ENCODE measurements at regions of chr3 and their contacts with region 1.

Region 1: DNA sequence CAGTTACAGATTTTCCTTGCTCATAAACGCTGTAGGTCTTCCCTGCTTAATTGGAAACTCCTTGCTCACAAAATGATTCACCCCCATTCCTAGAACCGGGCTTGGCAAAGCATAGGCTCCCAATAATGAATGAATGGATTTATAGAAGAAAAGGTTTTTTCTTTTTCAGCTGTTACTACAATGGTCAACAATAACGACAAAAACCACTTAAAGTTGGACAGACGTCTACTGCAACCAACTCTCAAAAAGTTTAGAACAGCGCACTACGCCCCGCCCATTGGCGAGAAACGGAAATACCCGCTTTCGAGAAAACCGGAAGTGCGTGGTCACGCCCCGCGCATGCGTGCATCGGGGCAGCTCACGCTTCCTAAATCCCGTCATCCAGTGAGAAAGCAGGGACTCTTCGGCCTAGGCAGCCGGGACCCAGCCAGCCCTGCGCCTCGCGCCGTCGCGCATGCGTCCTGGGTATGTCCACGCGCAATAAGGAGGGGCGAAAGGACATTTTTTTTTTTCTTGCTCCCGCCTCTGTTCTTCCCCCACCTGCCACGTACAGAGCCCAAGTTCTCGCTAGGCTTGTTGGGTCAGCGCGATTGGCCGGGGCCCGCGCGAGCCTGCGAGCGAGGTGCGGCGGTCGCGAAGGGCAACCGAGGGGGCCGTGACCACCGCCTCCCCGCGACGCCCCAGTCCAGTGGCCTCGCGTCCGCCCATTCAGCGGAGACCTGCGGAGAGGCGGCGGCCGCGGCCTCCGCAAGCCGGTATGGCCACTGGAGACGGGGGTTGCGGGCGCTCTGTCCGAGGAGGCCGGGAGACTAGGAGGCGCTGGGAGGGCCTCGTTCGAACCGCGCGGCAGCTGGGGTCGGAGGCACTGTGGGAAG is at the start of gene TFG:
- DNase-seq: peak; percentile 97
- ATAC-seq: peak; percentile 90
- H3K4me3 Mint-ChIP-seq: peak within 1 kb of the TSS; percentile 88
- H3K27ac Mint-ChIP-seq: peak within 1 kb of the TSS; percentile 92
- H3K4me1 Mint-ChIP-seq: peaks cover 40% of the 10 kb centered on the region
- H3K27me3 Mint-ChIP-seq: peaks cover 17% of the 10 kb centered on the region
- CTCF ChIP-seq: no peak
- total RNA-seq, gene TFG: 42.5 and 44.5 TPM in 2 replicates

Region 2: DNA sequence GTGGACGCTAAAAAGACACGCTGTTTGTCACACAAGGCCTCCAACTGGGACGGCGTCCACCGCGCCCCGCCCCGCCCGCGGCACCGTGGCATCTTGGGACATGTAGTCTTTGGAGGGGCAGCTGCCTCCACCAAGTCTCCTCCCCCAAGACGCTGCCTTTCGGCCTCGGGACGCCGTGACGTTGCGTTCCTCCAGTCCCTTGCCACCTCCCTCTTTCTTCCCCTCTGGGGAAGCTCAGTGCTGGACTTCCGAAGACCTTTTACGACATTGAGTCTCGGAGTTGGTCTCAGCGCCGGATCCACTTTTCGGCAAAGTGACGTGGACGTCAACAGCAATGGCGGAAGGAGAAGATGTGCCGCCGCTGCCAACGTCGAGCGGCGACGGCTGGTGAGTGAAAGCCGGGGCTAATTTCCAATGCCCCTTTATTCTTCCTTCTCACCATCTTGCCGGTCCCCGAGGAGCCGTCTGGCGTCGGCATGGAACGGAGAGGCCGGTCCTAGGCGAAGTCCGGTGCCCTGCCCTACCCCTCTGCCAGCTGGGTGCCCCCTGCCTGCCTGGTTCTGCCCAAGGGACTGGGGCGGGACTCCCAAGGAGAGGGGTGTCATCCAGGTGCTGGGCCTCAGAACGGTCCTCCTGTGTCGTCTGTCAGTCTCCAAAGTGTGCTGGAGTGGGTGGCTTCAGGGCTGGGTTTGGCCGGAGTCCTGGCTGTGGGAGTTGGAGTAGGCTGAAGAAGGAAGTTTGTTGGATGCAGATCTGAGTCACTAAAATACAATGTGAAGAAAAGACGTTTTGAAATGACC is 448.3 kb before region 1 on chr3 and contains the start of gene TBC1D23:
- CTCF ChIA-PET with region 1: no interaction called
- POLR2A ChIA-PET with region 1: interaction called, 9 read pairs
- intact Hi-C with region 1: loop called (anchors 1 kb)
- DNase-seq: peak; percentile 93
- ATAC-seq: peak; percentile 100
- H3K4me3 Mint-ChIP-seq: peak within 1 kb of the TSS; percentile 93
- H3K27ac Mint-ChIP-seq: peak within 1 kb of the TSS; percentile 96
- H3K4me1 Mint-ChIP-seq: peaks cover 43% of the 10 kb centered on the region
- H3K27me3 Mint-ChIP-seq: no peaks in the 10 kb centered on the region
- CTCF ChIP-seq: no peak
- total RNA-seq, gene TBC1D23: 27.2 and 27.7 TPM in 2 replicates

Region 3: DNA sequence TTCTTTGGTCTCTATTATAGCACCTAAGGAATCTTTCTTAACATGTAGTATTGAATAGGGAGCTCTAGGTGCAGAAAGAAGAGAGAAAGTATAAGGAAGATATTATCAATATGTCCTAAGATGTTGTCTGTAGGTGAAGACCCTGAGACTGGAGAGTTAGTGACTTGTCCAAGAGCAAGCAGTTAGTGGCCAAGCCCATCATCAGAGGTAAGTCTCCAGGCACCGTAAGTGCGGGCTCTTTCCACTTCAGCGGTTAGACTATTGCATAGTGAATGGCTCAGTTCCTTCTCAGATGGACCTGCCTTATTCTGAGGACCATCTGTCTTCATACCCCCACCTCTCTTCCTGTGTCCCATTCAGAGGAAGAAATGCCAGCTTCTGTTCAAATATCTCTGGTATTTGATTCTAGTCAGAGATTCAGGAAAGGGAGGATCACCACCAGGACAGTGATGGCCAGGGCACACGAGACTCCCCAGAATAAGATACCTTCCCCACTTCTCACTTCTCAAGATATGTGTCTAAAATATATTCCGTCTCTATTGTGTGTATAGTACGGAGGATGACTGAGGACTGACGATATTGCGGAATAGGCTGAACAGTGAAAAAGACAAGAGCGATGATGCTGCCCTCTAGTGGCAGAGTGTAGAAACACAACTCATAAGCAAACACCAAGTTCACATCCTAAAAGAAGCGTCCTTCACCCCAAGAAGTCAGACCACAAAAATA is 118.9 kb before region 1 on chr3:
- CTCF ChIA-PET with region 1: interaction called, 3 read pairs
- POLR2A ChIA-PET with region 1: interaction called, 3 read pairs
- intact Hi-C with region 1: loop called (anchors 2 kb)
- DNase-seq: no peak
- ATAC-seq: peak; percentile 92
- H3K4me3 Mint-ChIP-seq: no peak overlapping the region
- H3K27ac Mint-ChIP-seq: no peak overlapping the region
- H3K4me1 Mint-ChIP-seq: peaks cover 4% of the 10 kb centered on the region
- H3K27me3 Mint-ChIP-seq: peaks cover 2% of the 10 kb centered on the region
- CTCF ChIP-seq: peak; percentile 77

Region 4: GRCh38 chr3:100650651-100651611 is 58.3 kb before region 1 on chr3:
- CTCF ChIA-PET with region 1: interaction called, 3 read pairs
- POLR2A ChIA-PET with region 1: interaction called, 5 read pairs
- intact Hi-C with region 1: loop called (anchors 2 kb)
- DNase-seq: no peak
- ATAC-seq: peak; percentile 77
- H3K4me3 Mint-ChIP-seq: peak overlapping the region; percentile 45
- H3K27ac Mint-ChIP-seq: peak overlapping the region; percentile 70
- H3K4me1 Mint-ChIP-seq: peaks cover 9% of the 10 kb centered on the region
- H3K27me3 Mint-ChIP-seq: no peaks in the 10 kb centered on the region
- CTCF ChIP-seq: no peak

Region 5: GRCh38 chr3:100789579-100789978 is 80.4 kb after region 1 on chr3:
- CTCF ChIA-PET with region 1: no interaction called
- POLR2A ChIA-PET with region 1: no interaction called
- intact Hi-C with region 1: no loop called
- DNase-seq: no peak
- ATAC-seq: no peak
- H3K4me3 Mint-ChIP-seq: no peak overlapping the region
- H3K27ac Mint-ChIP-seq: no peak overlapping the region
- H3K4me1 Mint-ChIP-seq: no peaks in the 10 kb centered on the region
- H3K27me3 Mint-ChIP-seq: no peaks in the 10 kb centered on the region
- CTCF ChIP-seq: no peak

Region 6: DNA sequence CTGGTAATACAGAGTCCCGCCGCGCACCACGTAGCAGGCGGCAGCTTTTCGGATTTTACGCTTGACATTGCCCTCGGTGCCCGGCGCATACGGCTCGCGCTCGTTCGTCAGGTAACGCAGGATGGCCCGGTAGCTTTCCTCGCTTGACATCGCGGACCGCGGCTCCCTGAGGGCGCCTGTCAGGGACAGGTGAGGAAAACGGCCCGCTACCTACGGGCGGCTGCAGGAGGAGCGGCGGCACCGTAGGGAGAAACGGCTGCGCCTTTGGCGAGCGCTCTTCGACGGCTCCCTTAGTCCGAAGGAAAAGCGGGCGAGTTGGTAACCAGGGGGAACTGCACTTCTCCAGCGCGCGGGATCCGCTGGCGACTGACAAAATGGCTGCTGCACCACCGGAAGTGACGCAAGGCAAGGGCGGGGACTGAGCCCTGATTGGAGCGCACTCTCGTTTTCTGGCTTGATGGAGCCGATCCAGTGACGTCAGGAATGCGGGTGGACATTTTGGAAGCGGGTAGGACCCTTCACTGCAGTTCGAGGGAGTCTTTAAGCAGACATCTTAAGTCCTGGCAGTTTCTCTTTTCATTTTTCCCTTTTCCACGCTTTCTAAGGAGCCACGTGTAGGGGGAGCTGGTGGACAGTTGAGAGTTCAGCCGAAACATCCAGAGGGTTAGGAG is 967.7 kb after region 1 on chr3 and contains the start of gene ZBTB11:
- CTCF ChIA-PET with region 1: no interaction called
- POLR2A ChIA-PET with region 1: interaction called, 6 read pairs
- intact Hi-C with region 1: loop called (anchors 2 kb)
- DNase-seq: peak; percentile 99
- ATAC-seq: peak; percentile 68
- H3K4me3 Mint-ChIP-seq: peak within 1 kb of the TSS; percentile 93
- H3K27ac Mint-ChIP-seq: peak within 1 kb of the TSS; percentile 96
- H3K4me1 Mint-ChIP-seq: peaks cover 56% of the 10 kb centered on the region
- H3K27me3 Mint-ChIP-seq: no peaks in the 10 kb centered on the region
- CTCF ChIP-seq: no peak
- total RNA-seq, gene ZBTB11: 26.2 and 28.7 TPM in 2 replicates

Region 7: GRCh38 chr3:101779047-101779821 is 1070.0 kb after region 1 on chr3 and contains the start of gene NXPE3:
- CTCF ChIA-PET with region 1: no interaction called
- POLR2A ChIA-PET with region 1: no interaction called
- intact Hi-C with region 1: loop called (anchors 1 kb)
- DNase-seq: peak; percentile 94
- ATAC-seq: peak; percentile 92
- H3K4me3 Mint-ChIP-seq: peak within 1 kb of the TSS; percentile 87
- H3K27ac Mint-ChIP-seq: peak within 1 kb of the TSS; percentile 94
- H3K4me1 Mint-ChIP-seq: peaks cover 31% of the 10 kb centered on the region
- H3K27me3 Mint-ChIP-seq: no peaks in the 10 kb centered on the region
- CTCF ChIP-seq: no peak
- total RNA-seq, gene NXPE3: 15.8 and 16.0 TPM in 2 replicates